Activated CD4-positive, alpha-beta memory T cell treated with anti-CD3 and anti-CD28 coated beads for 36 hours (primary cell): ENCODE measurements at regions of chr5 and their contacts with region 1.

Region 1: DNA sequence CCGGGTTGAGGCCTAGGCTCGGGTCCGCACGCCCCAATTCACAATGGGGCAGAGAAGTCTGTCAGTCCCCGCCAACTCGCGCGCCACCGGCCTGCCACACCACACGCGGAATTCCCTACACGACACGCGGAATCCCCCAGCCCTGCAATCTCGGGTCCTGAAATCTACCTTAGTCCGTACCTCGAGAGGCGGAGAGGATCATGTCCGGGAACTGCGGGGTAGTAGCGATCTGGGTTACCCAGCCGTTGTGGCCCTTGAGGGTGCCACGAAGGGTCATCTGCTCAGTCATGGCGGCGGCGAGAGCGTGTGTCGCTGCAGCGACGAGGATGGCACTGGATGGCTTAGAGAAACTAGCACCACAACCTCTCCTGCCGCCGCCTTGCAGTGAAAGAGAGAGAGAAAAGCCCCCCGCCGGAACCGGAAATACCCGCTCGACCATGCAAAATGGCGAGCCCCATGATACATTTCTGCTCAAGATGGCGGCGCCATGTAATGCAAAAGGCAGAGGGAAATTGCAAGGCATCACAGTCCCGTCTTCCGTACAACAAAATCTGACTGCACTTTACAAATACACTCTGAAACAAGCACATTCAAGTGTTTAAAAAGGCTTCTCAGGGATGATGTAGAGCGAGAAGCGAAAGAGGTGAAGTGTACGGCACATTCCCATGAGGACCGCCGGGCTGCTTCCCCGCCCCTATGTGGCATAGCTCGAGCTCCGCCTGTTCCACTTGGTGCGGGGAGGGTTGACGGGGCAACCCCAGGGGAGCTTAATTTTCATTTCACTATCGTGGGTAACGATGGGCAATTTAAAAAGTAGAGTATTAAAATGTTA is at the start of gene RACK1:
- DNase-seq: peak; percentile 93
- H3K4me3 Mint-ChIP-seq: peak within 1 kb of the TSS; percentile 98
- H3K27ac Mint-ChIP-seq: peak within 1 kb of the TSS; percentile 99
- H3K4me1 Mint-ChIP-seq: peaks cover 51% of the 10 kb centered on the region
- H3K27me3 Mint-ChIP-seq: no peaks in the 10 kb centered on the region
- total RNA-seq, gene RACK1: 2,635 to 2,697 TPM

Region 2: GRCh38 chr5:179716286-179716685 is 1527.4 kb before region 1 on chr5:
- CTCF ChIA-PET with region 1: no interaction called
- POLR2A ChIA-PET with region 1: no interaction called
- intact Hi-C with region 1: no loop called
- DNase-seq: no peak
- H3K4me3 Mint-ChIP-seq: no peak overlapping the region
- H3K27ac Mint-ChIP-seq: no peak overlapping the region
- H3K4me1 Mint-ChIP-seq: peaks cover 5% of the 10 kb centered on the region
- H3K27me3 Mint-ChIP-seq: no peaks in the 10 kb centered on the region

Region 3: DNA sequence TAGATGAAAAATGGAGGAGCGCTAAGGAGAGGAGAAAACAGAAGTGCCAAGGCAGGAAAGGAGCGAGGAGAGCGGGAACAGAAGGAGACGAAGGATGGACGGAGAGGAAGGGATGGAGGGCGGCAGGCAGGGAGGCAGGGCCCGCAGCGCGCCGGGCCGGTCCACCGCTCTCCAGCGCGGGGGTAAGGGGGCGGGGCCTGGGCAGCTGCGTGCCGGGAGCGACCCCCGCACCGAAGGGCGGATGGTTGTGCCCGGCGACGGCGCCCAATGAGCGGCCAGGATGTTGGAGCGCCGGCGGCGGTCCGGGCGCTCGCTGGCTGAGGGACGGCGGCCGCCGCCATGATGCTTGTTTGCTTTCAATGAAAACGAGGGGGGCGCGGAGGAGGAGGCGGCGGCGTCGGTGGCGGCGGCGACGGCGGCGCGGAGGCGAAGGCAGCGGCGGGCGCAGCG is 749.6 kb before region 1 on chr5 and contains the start of gene CNOT6:
- CTCF ChIA-PET with region 1: no interaction called
- POLR2A ChIA-PET with region 1: no interaction called
- intact Hi-C with region 1: loop called (anchors 10 kb)
- DNase-seq: peak; percentile 95
- H3K4me3 Mint-ChIP-seq: peak within 1 kb of the TSS; percentile 84
- H3K27ac Mint-ChIP-seq: peak within 1 kb of the TSS; percentile 82
- H3K4me1 Mint-ChIP-seq: peaks cover 32% of the 10 kb centered on the region
- H3K27me3 Mint-ChIP-seq: no peaks in the 10 kb centered on the region
- total RNA-seq, gene CNOT6: 32.0 to 35.2 TPM

Region 4: GRCh38 chr5:180802325-180803180 is 441.2 kb before region 1 on chr5 and contains the start of gene MGAT1:
- CTCF ChIA-PET with region 1: no interaction called
- POLR2A ChIA-PET with region 1: no interaction called
- intact Hi-C with region 1: loop called (anchors 5 kb)
- DNase-seq: peak; percentile 84
- H3K4me3 Mint-ChIP-seq: peak within 1 kb of the TSS; percentile 85
- H3K27ac Mint-ChIP-seq: peak within 1 kb of the TSS; percentile 96
- H3K4me1 Mint-ChIP-seq: peaks cover 75% of the 10 kb centered on the region
- H3K27me3 Mint-ChIP-seq: no peaks in the 10 kb centered on the region
- total RNA-seq, gene MGAT1: 101 to 106 TPM

Region 5: DNA sequence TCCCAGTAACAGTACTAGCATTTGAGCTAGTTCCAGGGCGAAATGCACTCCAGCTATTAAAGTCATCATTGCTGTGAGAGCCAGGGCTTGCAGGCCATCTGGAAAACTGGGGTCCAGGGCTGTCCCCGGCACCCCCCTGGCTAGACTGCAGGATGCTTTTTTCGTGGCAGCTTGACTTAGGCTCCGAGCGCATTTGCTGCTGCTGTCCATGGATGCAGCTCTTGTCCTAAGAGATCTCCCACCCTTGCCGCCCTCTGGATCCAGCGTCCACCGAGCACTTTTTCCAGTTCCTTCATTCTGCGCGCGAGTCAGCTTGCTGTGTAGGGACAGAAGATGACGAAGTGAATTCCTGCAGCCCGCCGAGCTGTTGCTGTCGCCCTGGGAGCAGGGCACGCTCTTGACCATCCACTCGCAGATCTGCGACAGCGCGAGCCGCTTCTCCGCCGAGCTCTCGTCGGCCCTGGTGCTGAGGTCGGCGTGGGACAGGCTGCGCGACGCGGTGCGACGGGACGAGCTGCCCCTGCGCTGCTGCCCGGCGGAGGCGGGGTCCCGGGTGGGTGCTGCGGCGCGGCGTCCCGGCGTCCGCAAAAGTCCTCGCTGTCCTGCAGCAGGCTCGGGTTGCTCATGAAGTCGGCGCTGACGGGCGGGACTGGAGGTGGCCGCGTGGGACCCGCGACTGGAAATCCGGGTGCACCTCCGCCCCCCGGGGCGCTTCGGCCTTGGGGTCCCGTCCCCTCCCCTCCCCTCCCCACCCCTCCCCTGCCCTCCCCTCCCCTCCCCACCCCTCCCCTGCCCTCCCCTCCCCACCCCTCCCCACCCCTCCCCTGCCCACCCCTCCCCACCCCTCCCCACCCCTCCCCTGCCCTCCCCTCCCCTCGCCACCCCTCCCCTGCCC is 143.4 kb before region 1 on chr5:
- CTCF ChIA-PET with region 1: no interaction called
- POLR2A ChIA-PET with region 1: no interaction called
- intact Hi-C with region 1: no loop called
- DNase-seq: no peak
- H3K4me3 Mint-ChIP-seq: no peak overlapping the region
- H3K27ac Mint-ChIP-seq: no peak overlapping the region
- H3K4me1 Mint-ChIP-seq: peaks cover 12% of the 10 kb centered on the region
- H3K27me3 Mint-ChIP-seq: peaks cover 33% of the 10 kb centered on the region

Region 6: DNA sequence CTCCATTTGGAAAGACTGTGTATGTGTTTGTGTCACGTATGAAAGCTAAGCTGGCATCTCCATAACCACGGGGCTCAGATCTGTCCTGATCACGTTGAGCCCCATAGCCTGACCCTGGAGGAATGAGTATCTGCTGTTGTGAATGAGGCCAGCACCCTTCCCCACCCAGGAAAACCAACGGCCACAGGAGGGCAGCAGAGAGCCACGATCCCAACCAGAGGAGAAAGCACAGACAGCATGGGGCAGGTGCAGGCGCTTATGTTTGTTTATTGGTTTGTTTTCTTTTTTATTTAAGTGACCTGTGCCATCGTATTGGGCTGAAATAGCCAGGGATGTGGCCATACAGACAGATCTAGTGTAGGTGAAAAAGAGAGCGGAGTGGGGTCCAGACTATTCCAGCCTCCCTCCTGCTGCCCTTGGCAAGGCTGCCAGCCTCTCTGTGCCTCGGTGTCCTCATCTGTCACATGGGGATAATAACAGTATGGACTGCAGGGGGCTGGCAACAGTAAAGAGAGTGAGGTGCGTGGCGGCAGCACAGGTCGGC is 84.4 kb before region 1 on chr5:
- CTCF ChIA-PET with region 1: no interaction called
- POLR2A ChIA-PET with region 1: no interaction called
- intact Hi-C with region 1: loop called (anchors 1 kb)
- DNase-seq: peak; percentile 96
- H3K4me3 Mint-ChIP-seq: peak overlapping the region; percentile 36
- H3K27ac Mint-ChIP-seq: peak overlapping the region; percentile 72
- H3K4me1 Mint-ChIP-seq: peaks cover 33% of the 10 kb centered on the region
- H3K27me3 Mint-ChIP-seq: peaks cover 17% of the 10 kb centered on the region

Region 7: GRCh38 chr5:181207214-181208107 is 36.3 kb before region 1 on chr5:
- CTCF ChIA-PET with region 1: interaction called, 4 read pairs
- POLR2A ChIA-PET with region 1: interaction called, 4 read pairs
- intact Hi-C with region 1: loop called (anchors 5 kb)
- DNase-seq: peak; percentile 90
- H3K4me3 Mint-ChIP-seq: peak overlapping the region; percentile 86
- H3K27ac Mint-ChIP-seq: peak overlapping the region; percentile 93
- H3K4me1 Mint-ChIP-seq: peaks cover 27% of the 10 kb centered on the region
- H3K27me3 Mint-ChIP-seq: peaks cover 17% of the 10 kb centered on the region

Region 8: GRCh38 chr5:181260387-181261319 is 16.9 kb after region 1 on chr5 and contains the start of gene TRIM52:
- CTCF ChIA-PET with region 1: interaction called, 4 read pairs
- POLR2A ChIA-PET with region 1: interaction called, 60 read pairs
- intact Hi-C with region 1: loop called (anchors 1 kb)
- DNase-seq: peak; percentile 93
- H3K4me3 Mint-ChIP-seq: peak within 1 kb of the TSS; percentile 96
- H3K27ac Mint-ChIP-seq: peak within 1 kb of the TSS; percentile 97
- H3K4me1 Mint-ChIP-seq: peaks cover 39% of the 10 kb centered on the region
- H3K27me3 Mint-ChIP-seq: no peaks in the 10 kb centered on the region
- total RNA-seq, gene TRIM52: 10.9 to 11.7 TPM